ENCODE measurements at regions of chr10 and their contacts with region 1.

Region 1: GRCh38 chr10:31031558-31032257 is at the start of gene ZNF438:
- DNase-seq: peak; percentile 95 to 98
- H3K4me3 ChIP-seq: peak within 1 kb of the TSS; percentile 68
- H3K4me3 Mint-ChIP-seq: peak within 1 kb of the TSS; percentile 88
- H3K27ac Mint-ChIP-seq: peak within 1 kb of the TSS; percentile 95
- H3K4me1 ChIP-seq: peaks cover 6% of the 10 kb centered on the region; the same call in 1 of the 2 replicates
- H3K4me1 Mint-ChIP-seq: no peaks in the 10 kb centered on the region
- H3K27me3 ChIP-seq: no peaks in the 10 kb centered on the region
- H3K27me3 Mint-ChIP-seq: peaks cover 12% of the 10 kb centered on the region
- CTCF ChIP-seq: peak in 1 of 2 experiments; percentile 84
- total RNA-seq, gene ZNF438: 0.58 and 1.00 TPM in 2 replicates

Region 2: GRCh38 chr10:31118556-31118955 is 86.8 kb after region 1 on chr10:
- CTCF ChIA-PET with region 1: no interaction called
- POLR2A ChIA-PET with region 1: no interaction called
- intact Hi-C with region 1: no loop called
- DNase-seq: no peak
- H3K4me3 ChIP-seq: no peak overlapping the region
- H3K4me3 Mint-ChIP-seq: no peak overlapping the region
- H3K27ac Mint-ChIP-seq: no peak overlapping the region
- H3K4me1 ChIP-seq: no peaks in the 10 kb centered on the region
- H3K4me1 Mint-ChIP-seq: no peaks in the 10 kb centered on the region
- H3K27me3 ChIP-seq: no peaks in the 10 kb centered on the region
- H3K27me3 Mint-ChIP-seq: peaks cover 9% of the 10 kb centered on the region
- CTCF ChIP-seq: no peak

Region 3: DNA sequence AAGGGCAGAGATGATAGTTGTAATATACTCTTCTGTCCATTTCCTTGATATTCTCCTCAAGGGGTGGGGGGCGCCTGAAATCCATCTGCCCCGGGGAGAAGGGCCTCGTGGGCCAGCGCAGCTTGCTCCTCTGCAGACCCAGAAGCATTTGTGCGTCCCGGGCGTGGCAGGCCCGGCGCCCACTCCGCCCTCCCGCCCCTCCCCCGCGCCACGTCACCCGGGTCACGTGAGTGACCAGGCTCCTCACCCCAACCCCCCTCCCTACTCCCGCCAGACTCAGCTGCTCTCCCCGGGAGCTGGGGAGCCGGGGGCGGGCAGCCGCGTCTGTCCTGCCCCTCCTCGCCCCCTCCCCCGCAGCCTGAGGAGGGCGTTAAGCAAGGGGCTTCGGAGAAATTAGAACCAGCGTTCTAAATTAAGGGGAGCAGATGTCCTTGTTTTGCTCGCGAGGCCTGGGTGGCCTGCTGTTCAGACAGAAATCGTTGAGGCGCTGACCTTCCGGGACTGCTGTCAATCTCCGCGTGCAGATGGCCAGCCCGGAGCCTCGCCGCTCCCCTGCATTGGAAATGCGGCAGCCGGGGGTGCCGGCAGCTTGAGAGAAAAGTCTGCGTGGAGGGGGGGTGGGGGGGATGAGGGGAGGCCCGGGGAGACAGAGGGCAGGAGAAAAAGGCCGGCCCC is 102.1 kb after region 1 on chr10:
- CTCF ChIA-PET with region 1: no interaction called
- POLR2A ChIA-PET with region 1: no interaction called
- intact Hi-C with region 1: loop called (anchors 1 kb)
- DNase-seq: peak; percentile 78 to 88
- H3K4me3 ChIP-seq: peak overlapping the region; percentile 60
- H3K4me3 Mint-ChIP-seq: peak overlapping the region; percentile 69
- H3K27ac Mint-ChIP-seq: peak overlapping the region; percentile 76
- H3K4me1 ChIP-seq: peaks cover 6% of the 10 kb centered on the region; the same call in 1 of the 2 replicates
- H3K4me1 Mint-ChIP-seq: no peaks in the 10 kb centered on the region
- H3K27me3 ChIP-seq: no peaks in the 10 kb centered on the region
- H3K27me3 Mint-ChIP-seq: no peaks in the 10 kb centered on the region
- CTCF ChIP-seq: no peak

Region 4: DNA sequence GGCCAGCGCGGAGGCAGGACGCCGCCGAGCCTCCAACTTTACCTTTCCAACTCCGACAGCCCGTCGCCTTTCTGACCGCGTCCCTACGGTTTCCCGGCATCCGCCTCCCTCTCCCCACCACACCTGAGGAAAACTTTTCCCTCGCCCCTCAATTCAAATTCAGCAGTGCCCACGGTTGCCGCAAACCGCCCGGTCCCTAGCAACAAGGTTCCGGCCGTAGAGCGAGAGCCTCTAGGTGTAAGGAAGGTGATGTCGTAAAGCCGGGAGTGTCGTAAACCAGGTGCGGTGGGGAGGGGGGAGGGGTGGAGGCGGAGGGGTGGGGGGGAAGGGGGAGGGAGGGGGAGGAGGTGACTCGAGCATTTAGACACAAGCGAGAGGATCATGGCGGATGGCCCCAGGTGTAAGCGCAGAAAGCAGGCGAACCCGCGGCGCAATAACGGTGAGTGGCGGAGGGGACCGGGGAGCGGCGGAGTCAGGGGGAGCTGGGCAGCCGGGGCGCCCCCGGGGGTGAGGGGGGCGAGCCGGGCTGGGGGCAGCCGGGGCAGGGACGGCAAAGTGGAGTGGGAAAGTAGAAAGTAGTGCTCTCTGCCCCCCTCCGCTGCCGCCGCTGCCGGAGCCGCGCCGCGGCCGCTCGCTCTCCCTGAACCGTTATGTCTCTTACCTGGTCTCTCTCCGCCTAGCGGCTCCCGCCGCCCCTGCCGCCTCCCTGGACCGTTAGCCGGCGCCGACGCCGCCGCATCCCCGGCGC is 287.3 kb after region 1 on chr10 and contains the start of gene ZEB1:
- CTCF ChIA-PET with region 1: no interaction called
- POLR2A ChIA-PET with region 1: no interaction called
- intact Hi-C with region 1: loop called (anchors 2 kb)
- DNase-seq: peak; percentile 88 to 93
- H3K4me3 ChIP-seq: peak within 1 kb of the TSS; percentile 66
- H3K4me3 Mint-ChIP-seq: peak within 1 kb of the TSS; percentile 91
- H3K27ac Mint-ChIP-seq: peak within 1 kb of the TSS; percentile 72
- H3K4me1 ChIP-seq: peaks cover 11% of the 10 kb centered on the region
- H3K4me1 Mint-ChIP-seq: no peaks in the 10 kb centered on the region
- H3K27me3 ChIP-seq: peaks cover 2% of the 10 kb centered on the region
- H3K27me3 Mint-ChIP-seq: peaks cover 37% of the 10 kb centered on the region
- CTCF ChIP-seq: peak; percentile 40 to 65
- total RNA-seq, gene ZEB1: not detected in 2 replicates

Region 5: GRCh38 chr10:31808258-31809218 is 776.8 kb after region 1 on chr10:
- CTCF ChIA-PET with region 1: no interaction called
- POLR2A ChIA-PET with region 1: no interaction called
- intact Hi-C with region 1: loop called (anchors 1 kb)
- DNase-seq: peak in 1 of 2 experiments; percentile 42
- H3K4me3 ChIP-seq: no peak overlapping the region
- H3K4me3 Mint-ChIP-seq: no peak overlapping the region
- H3K27ac Mint-ChIP-seq: no peak overlapping the region
- H3K4me1 ChIP-seq: no peaks in the 10 kb centered on the region
- H3K4me1 Mint-ChIP-seq: no peaks in the 10 kb centered on the region
- H3K27me3 ChIP-seq: no peaks in the 10 kb centered on the region
- H3K27me3 Mint-ChIP-seq: no peaks in the 10 kb centered on the region
- CTCF ChIP-seq: peak; percentile 52 to 69